ENCODE measurements at regions of chr15 and their contacts with region 1.

Region 1: GRCh38 chr15:83747050-83747717 is 93.3 kb downstream of the ADAMTSL3 start:
- DNase-seq: no peak
- ATAC-seq: no peak

Region 2: GRCh38 chr15:83567318-83567717 is 179.9 kb before region 1 on chr15:
- intact Hi-C with region 1: loop called in 1 of 2 experiments (anchors 5 kb)
- DNase-seq: no peak
- ATAC-seq: no peak

Region 3: GRCh38 chr15:83880529-83880928 is 133.3 kb after region 1 on chr15:
- intact Hi-C with region 1: no loop called
- DNase-seq: no peak
- ATAC-seq: no peak